Activated B cell treated with CpG ODN at 0.5 μM for 24 hours (primary cell): ENCODE measurements at regions of chr20 and their contacts with region 1.

Region 1: GRCh38 chr20:49657118-49657901 is 56.4 kb downstream of the B4GALT5 start:
- DNase-seq: no peak
- ATAC-seq: no peak
- H3K4me3 Mint-ChIP-seq: no peak overlapping the region
- H3K27ac Mint-ChIP-seq: no peak overlapping the region
- H3K4me1 Mint-ChIP-seq: peaks cover 28% of the 10 kb centered on the region
- H3K27me3 Mint-ChIP-seq: no peaks in the 10 kb centered on the region
- CTCF ChIP-seq: no peak

Region 2: GRCh38 chr20:49245921-49246740 is 411.2 kb before region 1 on chr20:
- CTCF ChIA-PET with region 1: no interaction called
- POLR2A ChIA-PET with region 1: no interaction called
- intact Hi-C with region 1: no loop called
- DNase-seq: no peak
- ATAC-seq: peak; percentile 71
- H3K4me3 Mint-ChIP-seq: no peak overlapping the region
- H3K27ac Mint-ChIP-seq: peak overlapping the region; percentile 50
- H3K4me1 Mint-ChIP-seq: no peaks in the 10 kb centered on the region
- H3K27me3 Mint-ChIP-seq: no peaks in the 10 kb centered on the region
- CTCF ChIP-seq: no peak

Region 3: GRCh38 chr20:49602345-49603208 is 54.7 kb before region 1 on chr20:
- CTCF ChIA-PET with region 1: no interaction called
- POLR2A ChIA-PET with region 1: no interaction called
- intact Hi-C with region 1: no loop called
- DNase-seq: no peak
- ATAC-seq: no peak
- H3K4me3 Mint-ChIP-seq: no peak overlapping the region
- H3K27ac Mint-ChIP-seq: no peak overlapping the region
- H3K4me1 Mint-ChIP-seq: no peaks in the 10 kb centered on the region
- H3K27me3 Mint-ChIP-seq: peaks cover 6% of the 10 kb centered on the region
- CTCF ChIP-seq: no peak

Region 4: GRCh38 chr20:49631061-49631788 is 26.1 kb before region 1 on chr20:
- CTCF ChIA-PET with region 1: no interaction called
- POLR2A ChIA-PET with region 1: interaction called, 10 read pairs
- intact Hi-C with region 1: no loop called
- DNase-seq: no peak
- ATAC-seq: peak; percentile 32
- H3K4me3 Mint-ChIP-seq: peak overlapping the region; percentile 32
- H3K27ac Mint-ChIP-seq: peak overlapping the region; percentile 62
- H3K4me1 Mint-ChIP-seq: peaks cover 56% of the 10 kb centered on the region
- H3K27me3 Mint-ChIP-seq: peaks cover 1% of the 10 kb centered on the region
- CTCF ChIP-seq: no peak